T-cell (primary cell): ENCODE measurements at regions of chr2 and their contacts with region 1.

Region 1: DNA sequence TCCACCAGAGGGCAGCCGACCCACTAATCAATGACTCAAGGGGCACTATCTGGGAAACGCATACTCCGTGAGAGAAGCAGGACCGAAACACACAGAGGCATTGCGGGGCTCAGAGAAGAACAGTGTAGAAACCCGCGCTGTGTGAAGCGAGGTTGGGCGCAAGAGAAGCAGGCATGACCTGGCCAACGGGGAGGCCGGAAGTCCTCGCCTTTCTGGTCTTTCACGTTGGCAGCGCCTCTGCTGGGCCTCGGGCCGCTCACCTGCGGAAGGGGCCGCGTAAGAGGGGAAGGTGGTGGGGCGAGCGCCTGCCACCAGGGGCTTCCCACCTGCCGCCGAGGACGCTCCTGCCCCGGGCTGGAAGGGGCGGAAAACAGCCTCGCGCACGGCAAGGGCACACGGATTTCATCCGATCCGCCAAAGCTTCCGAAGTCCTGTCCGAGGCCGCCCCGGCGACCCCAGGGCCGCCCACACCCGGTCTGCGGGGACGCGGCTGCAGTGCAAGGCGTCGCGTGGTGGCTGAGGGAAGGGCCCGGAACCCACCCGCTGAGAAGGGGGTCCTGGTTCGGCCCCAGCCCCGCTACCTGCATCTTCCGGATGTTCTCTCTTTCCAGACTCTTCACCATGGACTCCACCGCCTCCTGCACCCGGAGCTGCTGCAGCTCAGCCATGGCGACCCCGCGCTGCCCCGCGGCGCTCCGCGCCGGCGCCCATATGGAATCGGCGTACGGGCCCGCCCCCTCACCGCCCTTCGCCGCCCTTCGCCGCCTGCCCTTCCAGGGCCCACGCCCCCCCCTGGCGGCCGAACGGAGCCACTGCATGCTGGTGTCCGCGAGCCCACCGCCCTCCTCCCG is at the start of gene FAM136A:
- DNase-seq: peak; percentile 71 to 93 (median 85)
- ATAC-seq: peak; percentile 91 to 97 (median 92)
- H3K4me3 ChIP-seq: peak within 1 kb of the TSS; percentile 79 to 88
- H3K4me3 Mint-ChIP-seq: peak within 1 kb of the TSS; percentile 85 to 93 (median 88)
- H3K27ac ChIP-seq: peak within 1 kb of the TSS; percentile 75
- H3K27ac Mint-ChIP-seq: peak within 1 kb of the TSS; percentile 91 to 93
- H3K4me1 ChIP-seq: peaks cover 5 to 24% of the 10 kb centered on the region in 2 experiments
- H3K4me1 Mint-ChIP-seq: peaks cover 29 to 35% (median 31%) of the 10 kb centered on the region in 3 donors
- H3K27me3 ChIP-seq: no peaks in the 10 kb centered on the region
- H3K27me3 Mint-ChIP-seq: no peaks in the 10 kb centered on the region
- total RNA-seq, gene FAM136A: 24.4 to 34.7 (median 29.7) TPM

Region 2: GRCh38 chr2:70616168-70616694 is 314.7 kb after region 1 on chr2:
- CTCF ChIA-PET with region 1: interaction called, 7 to 31 read pairs
- POLR2A ChIA-PET with region 1: no interaction called
- DNase-seq: no peak
- ATAC-seq: no peak
- H3K4me3 ChIP-seq: no peak overlapping the region
- H3K4me3 Mint-ChIP-seq: no peak overlapping the region
- H3K27ac ChIP-seq: no peak overlapping the region
- H3K27ac Mint-ChIP-seq: no peak overlapping the region
- H3K4me1 ChIP-seq: peaks cover 0 to 5% of the 10 kb centered on the region in 2 experiments
- H3K4me1 Mint-ChIP-seq: no peaks in the 10 kb centered on the region
- H3K27me3 ChIP-seq: peaks cover 0 to 11% of the 10 kb centered on the region in 2 experiments
- H3K27me3 Mint-ChIP-seq: peaks cover 7% of the 10 kb centered on the region in 2 donors

Region 3: GRCh38 chr2:70647873-70648481 is 346.4 kb after region 1 on chr2:
- CTCF ChIA-PET with region 1: interaction called, 6 to 51 read pairs
- POLR2A ChIA-PET with region 1: interaction called in 1 of 2 experiments, 3 read pairs
- DNase-seq: peak; percentile 38 to 83 (median 67)
- ATAC-seq: peak; percentile 82 to 89 (median 86)
- H3K4me3 ChIP-seq: no peak overlapping the region
- H3K4me3 Mint-ChIP-seq: no peak overlapping the region
- H3K27ac ChIP-seq: no peak overlapping the region
- H3K27ac Mint-ChIP-seq: no peak overlapping the region
- H3K4me1 ChIP-seq: no peaks in the 10 kb centered on the region
- H3K4me1 Mint-ChIP-seq: no peaks in the 10 kb centered on the region
- H3K27me3 ChIP-seq: peaks cover 0 to 8% of the 10 kb centered on the region in 2 experiments
- H3K27me3 Mint-ChIP-seq: peaks cover 5 to 8% of the 10 kb centered on the region in 2 donors